CD8-positive, alpha-beta memory T cell (primary cell): ENCODE measurements at regions of chr3 and their contacts with region 1.

Region 1: GRCh38 chr3:46276502-46277099 is 34.3 kb downstream of the CCR3 start:
- DNase-seq: peak; percentile 54 to 87 (median 67)
- H3K4me3 ChIP-seq: no peak overlapping the region
- H3K4me3 Mint-ChIP-seq: peak overlapping the region in 6 of 7 donors; percentile 1 to 74 (median 60)
- H3K27ac ChIP-seq: no peak overlapping the region
- H3K27ac Mint-ChIP-seq: peak overlapping the region; percentile 16 to 91 (median 76)
- H3K4me1 ChIP-seq: peaks cover 39% of the 10 kb centered on the region
- H3K4me1 Mint-ChIP-seq: peaks cover 40 to 49% (median 48%) of the 10 kb centered on the region in 3 donors
- H3K27me3 ChIP-seq: no peaks in the 10 kb centered on the region
- H3K27me3 Mint-ChIP-seq: peaks cover 0 to 1% of the 10 kb centered on the region in 2 donors

Region 2: DNA sequence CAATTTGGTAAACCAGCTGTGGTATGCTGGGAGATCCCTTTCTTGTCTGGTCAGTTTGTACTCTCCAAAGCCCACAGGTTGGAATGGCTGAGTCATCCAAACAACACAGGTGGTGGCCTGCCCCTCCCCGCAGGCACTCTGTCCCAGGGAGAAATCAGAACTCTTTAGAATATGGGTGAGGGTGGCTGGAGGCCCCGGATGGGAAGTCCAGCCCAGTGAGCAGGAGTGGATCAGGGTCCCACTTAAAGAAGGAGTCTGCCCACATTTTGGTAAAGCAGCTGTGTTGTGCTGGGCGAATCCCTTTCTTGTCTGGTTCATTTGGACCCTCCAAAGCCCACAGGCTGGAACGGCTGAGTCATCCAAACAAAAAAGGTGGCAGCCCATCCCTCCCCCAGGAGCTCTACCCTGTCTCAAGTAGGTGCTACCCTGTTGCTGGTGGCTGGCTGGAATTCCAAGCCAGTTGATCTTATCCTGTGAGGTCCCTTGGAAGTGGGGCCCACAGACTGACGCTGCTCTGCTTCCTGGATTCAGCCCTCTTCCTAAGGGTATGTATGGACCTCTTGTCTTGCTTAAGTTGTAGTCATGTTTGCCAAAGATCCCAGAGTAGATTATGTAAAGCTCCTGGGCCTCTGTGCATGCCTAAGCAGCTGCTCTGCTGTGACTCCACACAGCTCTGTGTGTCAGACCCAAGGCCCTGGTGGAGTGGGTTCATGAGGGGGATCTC is 113.1 kb before region 1 on chr3:
- CTCF ChIA-PET with region 1: no interaction called
- POLR2A ChIA-PET with region 1: no interaction called
- DNase-seq: no peak
- H3K4me3 ChIP-seq: no peak overlapping the region
- H3K4me3 Mint-ChIP-seq: no peak overlapping the region
- H3K27ac ChIP-seq: no peak overlapping the region
- H3K27ac Mint-ChIP-seq: no peak overlapping the region
- H3K4me1 ChIP-seq: no peaks in the 10 kb centered on the region
- H3K4me1 Mint-ChIP-seq: no peaks in the 10 kb centered on the region
- H3K27me3 ChIP-seq: no peaks in the 10 kb centered on the region
- H3K27me3 Mint-ChIP-seq: no peaks in the 10 kb centered on the region

Region 3: DNA sequence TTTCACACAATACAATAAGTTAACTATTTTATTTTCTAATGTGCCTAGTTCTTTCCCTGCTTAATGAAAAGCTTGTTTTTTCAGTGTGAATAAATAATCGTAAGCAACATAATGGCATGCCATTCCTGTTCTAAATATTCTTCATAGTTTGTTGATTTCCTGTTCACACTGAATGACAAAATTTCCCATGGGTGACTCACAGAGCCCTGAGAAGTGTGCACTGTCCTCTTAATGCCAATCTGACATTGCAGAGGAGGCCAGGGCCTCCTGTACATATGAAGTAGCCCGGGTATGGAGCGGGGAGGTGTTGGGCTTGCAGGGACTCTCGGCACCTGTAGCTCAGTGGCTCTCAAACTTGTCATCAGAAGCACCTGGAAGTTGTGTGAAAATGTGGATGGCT is 10.0 kb before region 1 on chr3:
- CTCF ChIA-PET with region 1: interaction called, 16 read pairs
- POLR2A ChIA-PET with region 1: interaction called, 3 read pairs
- DNase-seq: no peak
- H3K4me3 ChIP-seq: no peak overlapping the region
- H3K4me3 Mint-ChIP-seq: no peak overlapping the region
- H3K27ac ChIP-seq: no peak overlapping the region
- H3K27ac Mint-ChIP-seq: peak overlapping the region in 1 of 8 donors; percentile 37
- H3K4me1 ChIP-seq: peaks cover 12% of the 10 kb centered on the region
- H3K4me1 Mint-ChIP-seq: peaks cover 39 to 57% (median 57%) of the 10 kb centered on the region in 3 donors
- H3K27me3 ChIP-seq: no peaks in the 10 kb centered on the region
- H3K27me3 Mint-ChIP-seq: no peaks in the 10 kb centered on the region

Region 4: GRCh38 chr3:46349485-46350261 is 73.1 kb after region 1 on chr3:
- CTCF ChIA-PET with region 1: interaction called, 13 read pairs
- POLR2A ChIA-PET with region 1: no interaction called
- DNase-seq: peak in 2 of 5 donors; percentile 31 to 35
- H3K4me3 ChIP-seq: no peak overlapping the region
- H3K4me3 Mint-ChIP-seq: peak overlapping the region; percentile 25 to 83 (median 69)
- H3K27ac ChIP-seq: no peak overlapping the region
- H3K27ac Mint-ChIP-seq: peak overlapping the region; percentile 64 to 93 (median 84)
- H3K4me1 ChIP-seq: peaks cover 59% of the 10 kb centered on the region
- H3K4me1 Mint-ChIP-seq: peaks cover 65 to 73% (median 72%) of the 10 kb centered on the region in 3 donors
- H3K27me3 ChIP-seq: no peaks in the 10 kb centered on the region
- H3K27me3 Mint-ChIP-seq: no peaks in the 10 kb centered on the region

Region 5: DNA sequence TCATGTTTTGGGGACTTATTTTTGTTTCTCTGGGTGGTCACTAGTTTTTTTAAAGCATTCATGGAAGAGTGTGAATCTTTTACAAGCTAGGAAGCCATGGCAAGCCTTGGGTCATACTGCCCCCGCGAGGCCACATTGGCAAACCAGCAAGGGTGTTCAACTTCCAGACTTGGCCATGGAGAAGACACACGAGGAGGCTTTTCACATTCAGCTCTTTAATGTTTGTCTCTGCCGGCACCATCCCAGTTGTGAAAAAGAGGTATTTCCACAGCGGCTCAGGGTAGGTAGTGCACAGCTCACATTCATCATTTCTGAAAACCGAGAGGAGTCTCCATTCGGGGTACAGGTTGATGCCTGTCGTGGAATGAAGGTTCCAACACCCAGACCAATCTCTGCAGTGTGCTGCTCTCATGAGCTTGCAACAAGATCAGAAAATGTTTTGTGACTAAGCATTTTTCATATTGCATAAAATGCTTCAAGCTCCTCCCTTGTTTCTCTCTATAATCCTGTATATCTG is 101.9 kb after region 1 on chr3:
- CTCF ChIA-PET with region 1: interaction called, 22 read pairs
- POLR2A ChIA-PET with region 1: no interaction called
- DNase-seq: peak; percentile 33 to 76 (median 45)
- H3K4me3 ChIP-seq: no peak overlapping the region
- H3K4me3 Mint-ChIP-seq: peak overlapping the region in 5 of 7 donors; percentile 4 to 51 (median 16)
- H3K27ac ChIP-seq: no peak overlapping the region
- H3K27ac Mint-ChIP-seq: peak overlapping the region; percentile 1 to 80 (median 56)
- H3K4me1 ChIP-seq: peaks cover 32% of the 10 kb centered on the region
- H3K4me1 Mint-ChIP-seq: peaks cover 59 to 77% (median 73%) of the 10 kb centered on the region in 3 donors
- H3K27me3 ChIP-seq: no peaks in the 10 kb centered on the region
- H3K27me3 Mint-ChIP-seq: no peaks in the 10 kb centered on the region